Prostate gland (tissue), 2 donors: ENCODE measurements at regions of chr2 and their contacts with region 1.

Region 1: DNA sequence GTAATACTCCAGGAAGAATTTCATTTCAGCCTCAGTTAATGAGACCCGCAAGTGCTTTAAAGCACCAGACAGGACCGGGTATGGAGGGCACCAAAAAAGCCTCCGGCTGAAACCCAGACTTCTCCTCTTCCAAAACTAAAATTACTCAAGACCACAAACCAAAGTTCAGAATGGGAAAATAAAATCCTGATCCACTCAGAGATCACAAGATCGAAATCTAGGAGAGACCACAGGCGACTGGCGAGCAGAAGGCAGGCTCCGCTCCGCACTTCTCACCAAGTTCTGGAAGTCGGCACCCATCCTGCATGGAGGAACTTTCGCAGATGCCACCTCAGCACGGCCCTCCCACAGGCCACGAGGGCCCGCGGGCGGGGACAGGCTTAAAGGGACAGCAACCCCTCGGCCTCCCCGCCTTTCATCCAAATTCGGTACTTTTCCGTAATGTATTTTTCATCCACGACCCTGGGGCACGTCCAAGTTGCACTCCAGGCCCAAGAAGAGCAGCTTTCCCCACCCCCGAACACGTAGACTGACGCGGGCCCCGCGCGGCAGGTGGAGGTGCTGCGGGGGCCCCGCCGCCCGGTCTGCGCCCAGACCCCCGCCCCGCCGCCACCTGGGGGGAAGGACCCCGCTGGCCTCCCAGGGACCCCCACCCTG is 43.7 kb downstream of the HDLBP start:
- DNase-seq: peak; percentile 88
- H3K4me3 ChIP-seq: peak overlapping the region; percentile 94 to 100
- H3K27ac ChIP-seq: peak overlapping the region; percentile 93 to 99
- H3K4me1 ChIP-seq: peaks cover 9% of the 10 kb centered on the region
- H3K27me3 ChIP-seq: no peaks in the 10 kb centered on the region
- CTCF ChIP-seq: no peak
- POLR2A ChIP-seq: peak; percentile 78

Region 2: DNA sequence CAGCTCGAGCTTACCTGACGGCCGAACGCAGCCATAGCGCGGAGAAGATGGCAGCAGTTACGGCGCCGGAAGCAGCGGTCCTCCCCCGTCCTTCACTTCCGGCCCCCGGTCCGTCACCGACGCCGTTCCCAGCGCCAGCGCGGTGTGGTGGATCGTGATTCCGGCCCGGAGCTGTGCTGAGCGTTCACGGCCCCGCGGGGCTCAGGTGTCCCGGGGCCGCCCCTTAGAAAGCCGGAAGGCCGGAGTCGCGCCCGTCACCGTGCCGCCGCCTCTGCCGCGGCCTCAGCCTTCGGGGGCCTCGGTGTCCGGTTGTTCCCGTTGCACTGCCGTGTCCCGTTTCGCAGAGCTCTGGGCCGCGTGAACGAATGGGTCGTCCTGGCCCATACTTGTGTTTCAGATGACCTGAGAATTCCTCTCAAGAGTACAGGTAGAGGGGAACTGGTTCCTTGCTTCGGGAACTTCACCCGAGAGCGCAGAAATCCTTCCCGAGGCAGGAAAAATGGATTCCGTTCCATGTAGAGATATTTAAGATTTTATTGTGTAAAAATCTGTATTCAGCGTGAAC is 169.4 kb before region 1 on chr2 and contains the start of gene MTERF4:
- intact Hi-C with region 1: loop called (anchors 5 kb)
- DNase-seq: peak; percentile 89
- H3K4me3 ChIP-seq: peak within 1 kb of the TSS; percentile 84 to 88
- H3K27ac ChIP-seq: peak within 1 kb of the TSS; percentile 89 to 91
- H3K4me1 ChIP-seq: no peaks in the 10 kb centered on the region
- H3K27me3 ChIP-seq: no peaks in the 10 kb centered on the region
- CTCF ChIP-seq: peak in 1 of 4 experiments; percentile 18
- POLR2A ChIP-seq: peak; percentile 69
- total RNA-seq, gene MTERF4: 91.3 to 98.5 TPM